ENCODE measurements at regions of chr1 and their contacts with region 1.

Region 1: DNA sequence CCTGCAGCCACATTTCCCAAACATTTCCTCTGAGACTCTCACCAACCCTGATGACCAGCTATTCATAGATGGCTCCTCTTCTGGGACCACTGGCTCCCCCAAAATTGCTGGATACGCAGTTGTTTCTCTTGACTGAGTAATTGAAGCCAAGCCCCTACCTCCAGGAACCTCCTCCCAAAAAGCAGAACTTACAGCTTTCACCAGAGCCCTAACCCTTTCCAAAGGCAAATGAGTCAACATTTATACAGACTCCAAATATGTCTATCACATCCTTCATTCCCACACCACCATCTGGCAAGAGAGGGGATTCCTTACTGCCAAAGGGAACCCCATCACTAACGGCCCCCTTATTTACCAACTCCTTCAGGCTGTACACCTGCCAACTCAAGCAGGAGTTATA is 20.3 kb upstream of the CA6 start:
- ATAC-seq: no peak
- H3K4me3 ChIP-seq: no peak overlapping the region
- H3K27ac ChIP-seq: no peak overlapping the region
- H3K4me1 ChIP-seq: no peaks in the 10 kb centered on the region

Region 2: GRCh38 chr1:8987881-8988617 is 62.6 kb after region 1 on chr1:
- in situ Hi-C with region 1: loop called in 1 of 9 experiments (anchors 10 kb)
- ATAC-seq: peak; percentile 54 to 89 (median 82)
- H3K4me3 ChIP-seq: no peak overlapping the region
- H3K27ac ChIP-seq: no peak overlapping the region
- H3K4me1 ChIP-seq: peaks cover 3 to 4% of the 10 kb centered on the region in 2 donors